ENCODE measurements at regions of chr4 and their contacts with region 1.

Region 1: DNA sequence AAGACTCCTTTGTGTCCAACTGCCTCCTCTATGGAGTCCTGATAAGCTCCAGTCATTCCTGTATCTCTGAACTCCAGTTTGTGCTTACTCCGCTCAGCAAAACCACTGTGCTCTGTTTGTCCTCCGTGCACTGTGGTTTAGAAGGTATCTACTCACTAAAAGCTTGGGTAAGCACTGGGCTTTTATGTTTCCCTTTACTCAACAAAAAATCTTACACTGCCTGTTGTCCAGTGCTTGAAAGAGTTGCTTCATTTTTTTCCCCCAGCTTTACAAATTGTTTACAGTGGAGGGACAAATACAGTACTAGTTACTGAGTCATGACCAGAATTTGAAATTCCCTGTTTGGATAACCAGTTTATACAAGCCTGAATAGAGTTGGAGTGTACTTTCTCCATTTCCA is 545.3 kb upstream of the FAT1 start:
- DNase-seq: no peak
- H3K4me3 ChIP-seq: no peak overlapping the region
- H3K27ac ChIP-seq: no peak overlapping the region
- H3K4me1 ChIP-seq: no peaks in the 10 kb centered on the region
- H3K27me3 ChIP-seq: no peaks in the 10 kb centered on the region
- CTCF ChIP-seq: no peak

Region 2: DNA sequence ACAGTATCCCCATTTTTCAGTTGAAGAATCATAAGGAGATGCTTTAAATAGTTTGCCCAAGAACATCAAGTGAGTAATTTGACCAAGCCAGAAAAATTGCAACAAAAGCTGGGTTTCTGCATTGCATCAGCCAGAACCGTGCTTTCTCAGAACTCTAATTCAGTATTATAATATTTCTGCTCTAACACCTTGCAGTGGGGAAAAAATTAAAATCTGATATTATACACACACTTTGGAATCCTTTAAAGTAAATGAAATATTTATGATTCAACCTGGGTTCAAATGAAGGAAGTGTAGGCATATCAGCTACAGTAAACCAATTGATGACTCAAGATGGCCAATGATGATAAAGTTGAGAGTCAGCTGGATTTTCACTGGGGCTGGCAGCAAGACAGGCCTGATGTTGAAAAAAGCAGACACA is 339.1 kb after region 1 on chr4:
- CTCF ChIA-PET with region 1: no interaction called
- POLR2A ChIA-PET with region 1: interaction called, 11 read pairs
- intact Hi-C with region 1: no loop called
- DNase-seq: peak in 1 of 2 experiments; percentile 8
- H3K4me3 ChIP-seq: no peak overlapping the region
- H3K27ac ChIP-seq: 0 out of 2 replicates have a peak overlapping the region, but pooled peaks have one; percentile 16
- H3K4me1 ChIP-seq: no peaks in the 10 kb centered on the region
- H3K27me3 ChIP-seq: no peaks in the 10 kb centered on the region
- CTCF ChIP-seq: no peak

Measured in PC-9 (cell line).